ENCODE measurements at regions of chr11 and their contacts with region 1.

Region 1: DNA sequence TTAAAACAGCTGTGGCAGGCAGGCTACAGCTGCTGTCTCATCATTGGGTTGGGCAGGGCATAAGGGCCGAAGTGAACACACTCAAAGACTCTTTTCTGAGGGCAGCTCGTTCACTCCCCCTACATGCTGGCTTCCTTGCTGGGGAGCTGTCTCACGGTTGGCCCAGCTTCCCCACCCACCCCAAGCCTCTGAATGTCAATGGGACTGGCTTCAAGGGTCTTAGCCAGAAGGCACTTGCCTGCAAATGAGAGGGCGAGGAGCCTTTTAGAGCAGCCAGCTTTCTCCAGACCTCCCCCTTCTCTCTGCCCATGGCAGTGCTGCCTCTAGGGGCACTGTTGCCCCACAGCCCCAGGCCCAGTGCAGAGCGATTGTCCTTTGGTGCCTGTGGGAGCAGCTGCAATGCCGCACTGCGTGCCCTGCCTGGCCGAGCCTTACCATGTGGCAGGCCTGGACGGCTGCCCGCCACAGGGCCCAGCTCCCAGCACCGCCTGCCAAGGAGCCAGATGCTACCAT is 94.7 kb upstream of the RASSF10 start:
- DNase-seq: peak; percentile 84 to 92 (median 89)
- H3K4me3 ChIP-seq: peak overlapping the region in 8 of 59 donors; percentile 2 to 37 (median 17)
- H3K27ac ChIP-seq: peak overlapping the region in 52 of 59 donors; percentile 3 to 83 (median 66)
- H3K27me3 ChIP-seq: no peaks in the 10 kb centered on the region
- CTCF ChIP-seq: peak; percentile 40 to 94 (median 80)

Region 2: DNA sequence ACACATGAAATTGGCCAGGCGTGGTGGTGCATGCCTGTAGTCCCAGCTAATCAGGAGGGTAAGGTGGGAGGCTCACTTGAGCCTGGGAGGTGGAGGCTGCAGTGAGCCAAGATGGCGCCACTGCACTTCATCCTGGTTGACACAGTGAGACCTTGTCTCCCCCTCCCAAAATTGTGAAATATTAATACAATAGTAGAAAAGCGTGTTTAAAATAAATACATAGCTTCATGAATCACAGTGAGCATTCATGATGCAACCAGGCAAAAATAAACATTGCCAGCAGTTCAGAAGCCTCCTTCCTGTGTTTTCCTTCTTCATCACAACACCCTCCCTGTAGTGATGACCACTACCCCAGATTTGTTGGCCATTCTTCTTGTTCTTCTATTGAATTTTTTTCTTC is 244.5 kb before region 1 on chr11:
- intact Hi-C with region 1: no loop called
- DNase-seq: no peak
- H3K4me3 ChIP-seq: no peak overlapping the region
- H3K27ac ChIP-seq: no peak overlapping the region
- H3K27me3 ChIP-seq: no peaks in the 10 kb centered on the region
- CTCF ChIP-seq: no peak

Region 3: DNA sequence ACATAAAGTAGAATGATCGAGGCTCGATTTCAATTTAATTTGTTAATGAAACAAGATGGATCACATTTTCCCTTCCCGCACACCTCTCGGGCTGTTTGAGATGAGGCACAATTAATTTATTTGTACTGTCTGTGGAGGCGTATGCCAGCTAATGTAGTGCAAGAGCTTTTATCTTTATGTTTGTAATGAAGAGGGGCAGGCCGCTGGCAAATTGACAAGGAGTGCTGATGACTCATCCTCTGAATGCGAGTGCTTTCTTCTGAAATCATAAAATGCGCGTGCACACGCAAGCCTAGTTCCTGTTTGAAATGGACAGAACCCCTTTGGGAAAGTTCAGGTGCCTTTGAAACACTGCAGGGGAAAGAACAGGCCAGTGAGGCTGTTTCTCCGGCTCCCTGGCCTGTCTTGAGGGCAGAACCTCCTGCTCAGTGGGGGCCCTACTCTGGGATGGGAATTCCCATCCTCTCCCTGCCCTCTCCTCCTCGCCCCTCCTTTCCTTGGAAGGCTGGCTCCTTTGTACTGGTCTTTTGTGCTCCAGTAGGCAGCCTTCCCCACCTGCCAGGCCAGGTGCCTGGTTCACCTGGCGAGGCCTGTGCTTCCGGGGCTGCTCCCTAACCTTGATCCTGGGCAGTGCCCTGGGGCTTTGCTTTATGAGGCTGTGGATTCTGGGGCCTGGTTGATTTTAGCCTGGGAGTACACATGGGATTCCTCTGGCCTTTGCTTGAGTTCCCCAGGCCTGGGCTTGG is 190.0 kb before region 1 on chr11:
- intact Hi-C with region 1: no loop called
- DNase-seq: no peak
- H3K4me3 ChIP-seq: no peak overlapping the region
- H3K27ac ChIP-seq: peak overlapping the region in 3 of 59 donors; percentile 6 to 33 (median 14)
- H3K27me3 ChIP-seq: no peaks in the 10 kb centered on the region
- CTCF ChIP-seq: no peak

Region 4: GRCh38 chr11:13152736-13153533 is 238.5 kb after region 1 on chr11:
- intact Hi-C with region 1: loop called in 1 of 2 experiments (anchors 2 kb)
- DNase-seq: no peak
- H3K4me3 ChIP-seq: no peak overlapping the region
- H3K27ac ChIP-seq: no peak overlapping the region
- H3K27me3 ChIP-seq: no peaks in the 10 kb centered on the region
- CTCF ChIP-seq: peak in 55 of 56 donors; percentile 23 to 86 (median 61)

Measured in dorsolateral prefrontal cortex (tissue), 120 donors.